ENCODE measurements at regions of chr9 and their contacts with region 1.

Region 1: DNA sequence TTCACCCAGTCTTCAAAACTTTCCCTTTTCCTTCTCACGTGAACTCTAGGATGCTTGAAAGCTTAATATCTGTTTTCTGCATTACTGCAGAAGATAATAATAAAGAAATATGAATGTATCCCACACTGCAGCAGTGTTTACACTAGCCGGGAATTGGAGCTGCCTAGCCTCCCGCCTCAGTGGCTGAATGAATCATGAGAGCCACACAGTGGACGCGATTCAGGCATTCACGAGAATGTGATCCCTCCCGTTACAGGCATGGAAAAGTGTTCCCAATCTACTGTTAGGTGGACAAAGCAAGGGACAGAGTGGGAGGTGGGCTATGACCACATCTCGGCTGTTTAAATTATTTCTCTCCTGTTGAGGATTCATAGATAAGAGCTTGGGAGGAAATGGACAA is 69.4 kb upstream of the CTSL start:
- DNase-seq: no peak
- H3K4me3 ChIP-seq: no peak overlapping the region
- H3K27ac ChIP-seq: no peak overlapping the region
- H3K4me1 ChIP-seq: peaks cover 0 to 6% (median 0%) of the 10 kb centered on the region in 3 donors
- H3K27me3 ChIP-seq: no peaks in the 10 kb centered on the region
- CTCF ChIP-seq: no peak
- POLR2A ChIP-seq: no peak

Region 2: DNA sequence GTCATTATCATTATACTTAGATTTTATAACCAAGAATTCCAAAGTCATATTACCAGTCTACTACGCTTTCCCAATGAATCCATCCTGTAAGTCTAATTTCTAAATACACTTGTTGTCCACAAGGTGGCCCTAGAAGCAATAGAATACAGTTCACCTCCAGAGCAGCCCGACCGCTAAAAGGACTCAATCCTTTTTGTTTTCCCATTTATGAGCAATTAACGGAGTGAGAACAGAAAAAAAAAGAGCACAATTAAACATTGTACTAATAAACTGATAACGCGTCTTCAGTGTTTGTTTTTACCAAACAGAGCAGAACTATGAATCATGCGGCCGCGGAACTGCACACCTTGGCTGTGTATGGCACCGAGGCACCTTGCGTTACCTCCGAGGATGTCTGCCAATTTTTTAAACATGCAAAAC is 319.6 kb before region 1 on chr9:
- intact Hi-C with region 1: loop called (anchors 5 kb)
- DNase-seq: no peak
- H3K4me3 ChIP-seq: peak overlapping the region in 3 of 4 donors; percentile 19 to 49 (median 34)
- H3K27ac ChIP-seq: no peak overlapping the region
- H3K4me1 ChIP-seq: peaks cover 0 to 16% (median 5%) of the 10 kb centered on the region in 3 donors
- H3K27me3 ChIP-seq: peaks cover 0 to 25% (median 0%) of the 10 kb centered on the region in 4 donors
- CTCF ChIP-seq: peak; percentile 41 to 73 (median 62)
- POLR2A ChIP-seq: no peak

Region 3: DNA sequence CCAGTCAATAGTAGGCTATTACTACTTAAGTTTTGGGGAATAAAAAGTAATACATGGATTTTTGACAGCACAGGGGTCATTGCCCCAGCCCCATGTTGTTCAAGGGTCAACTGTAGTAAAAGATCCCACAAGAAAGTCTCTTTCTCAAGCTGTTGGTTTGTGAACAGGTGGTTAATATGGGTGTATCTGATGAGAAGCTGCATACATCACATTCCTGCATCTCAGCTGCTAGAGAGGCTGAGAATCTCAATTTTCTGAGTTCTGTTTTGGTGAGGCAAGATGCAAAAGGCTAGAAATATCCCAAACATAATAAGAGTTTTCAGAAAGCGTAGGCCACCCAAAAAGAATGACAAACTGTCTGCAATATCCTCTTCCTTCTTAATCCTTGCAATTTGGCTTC is 235.6 kb before region 1 on chr9:
- intact Hi-C with region 1: no loop called
- DNase-seq: no peak
- H3K4me3 ChIP-seq: no peak overlapping the region
- H3K27ac ChIP-seq: no peak overlapping the region
- H3K4me1 ChIP-seq: no peaks in the 10 kb centered on the region
- H3K27me3 ChIP-seq: peaks cover 0 to 9% (median 0%) of the 10 kb centered on the region in 4 donors
- CTCF ChIP-seq: no peak
- POLR2A ChIP-seq: no peak